SK-N-SH (cell line): ENCODE measurements at regions of chr6 and their contacts with region 1.

Region 1: GRCh38 chr6:151409260-151409659 is 17.9 kb upstream of the ZBTB2 start:
- DNase-seq: no peak
- H3K4me3 ChIP-seq: no peak overlapping the region
- H3K27ac ChIP-seq: no peak overlapping the region
- H3K4me1 ChIP-seq: no peaks in the 10 kb centered on the region
- H3K27me3 ChIP-seq: no peaks in the 10 kb centered on the region
- CTCF ChIP-seq: no peak
- EP300 ChIP-seq: no peak
- RAD21 ChIP-seq: no peak

Region 2: GRCh38 chr6:151390276-151391032 is 18.8 kb before region 1 on chr6:
- CTCF ChIA-PET with region 1: interaction called, 44 read pairs
- POLR2A ChIA-PET with region 1: no interaction called
- DNase-seq: peak; percentile 98
- H3K4me3 ChIP-seq: peak overlapping the region; percentile 86 to 92; a peak in 3 of 4 replicates
- H3K27ac ChIP-seq: peak overlapping the region; percentile 98 to 99
- H3K4me1 ChIP-seq: peaks cover 24 to 31% of the 10 kb centered on the region in 2 experiments
- H3K27me3 ChIP-seq: no peaks in the 10 kb centered on the region
- CTCF ChIP-seq: no peak
- EP300 ChIP-seq: no peak
- RAD21 ChIP-seq: no peak

Region 3: DNA sequence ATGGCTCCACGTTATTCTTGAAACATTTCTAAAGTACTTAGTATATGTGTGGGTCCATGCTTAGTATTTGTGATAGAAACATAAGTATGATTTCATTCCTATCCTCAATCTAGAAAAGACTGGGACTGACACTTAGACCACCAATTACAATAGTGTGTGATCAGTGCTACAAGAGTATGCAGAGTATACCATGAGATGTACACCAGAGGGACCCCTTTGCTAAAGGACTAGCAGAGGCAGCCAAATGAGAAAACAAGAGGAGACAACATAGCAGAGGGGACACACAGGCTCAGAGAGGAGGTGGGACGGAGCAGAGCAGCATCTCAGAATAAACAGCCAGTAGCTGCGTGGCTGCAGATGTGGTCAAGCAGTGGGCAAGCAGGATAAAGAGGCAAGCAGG is 21.6 kb after region 1 on chr6:
- CTCF ChIA-PET with region 1: interaction called, 16 read pairs
- POLR2A ChIA-PET with region 1: no interaction called
- DNase-seq: no peak
- H3K4me3 ChIP-seq: no peak overlapping the region
- H3K27ac ChIP-seq: no peak overlapping the region
- H3K4me1 ChIP-seq: no peaks in the 10 kb centered on the region; a peak in 1 of 4 replicates
- H3K27me3 ChIP-seq: no peaks in the 10 kb centered on the region
- CTCF ChIP-seq: no peak
- EP300 ChIP-seq: no peak
- RAD21 ChIP-seq: no peak; the same call in 1 of the 2 replicates

Region 4: DNA sequence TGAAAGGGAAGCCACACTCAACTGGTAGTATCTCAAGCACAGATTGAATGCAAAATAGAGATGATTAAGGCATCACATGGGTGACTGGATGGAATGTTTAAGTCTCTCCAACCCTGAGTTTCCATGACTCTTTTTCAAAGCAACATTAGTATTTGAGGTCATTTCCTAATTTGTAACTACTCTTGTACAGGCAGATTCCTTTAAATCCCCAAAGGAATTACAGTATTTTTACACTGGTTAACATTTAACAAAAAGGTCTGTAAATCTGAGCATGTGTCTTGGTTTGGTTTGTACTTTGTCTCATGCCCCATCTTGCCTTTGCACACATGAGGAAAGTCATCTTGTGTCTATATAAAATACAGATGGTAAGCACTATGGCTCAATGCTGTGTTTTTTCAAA is 27.5 kb after region 1 on chr6:
- CTCF ChIA-PET with region 1: interaction called, 16 read pairs
- POLR2A ChIA-PET with region 1: no interaction called
- DNase-seq: no peak
- H3K4me3 ChIP-seq: no peak overlapping the region
- H3K27ac ChIP-seq: peak overlapping the region in 1 of 2 experiments; percentile 48; a peak in 2 of 4 replicates
- H3K4me1 ChIP-seq: peaks cover 2 to 18% of the 10 kb centered on the region in 2 experiments; a peak in 2 of 4 replicates
- H3K27me3 ChIP-seq: no peaks in the 10 kb centered on the region
- CTCF ChIP-seq: no peak
- EP300 ChIP-seq: no peak
- RAD21 ChIP-seq: no peak

Region 5: GRCh38 chr6:151534576-151534975 is 125.3 kb after region 1 on chr6:
- CTCF ChIA-PET with region 1: no interaction called
- POLR2A ChIA-PET with region 1: no interaction called
- DNase-seq: no peak
- H3K4me3 ChIP-seq: no peak overlapping the region
- H3K27ac ChIP-seq: no peak overlapping the region
- H3K4me1 ChIP-seq: no peaks in the 10 kb centered on the region
- H3K27me3 ChIP-seq: no peaks in the 10 kb centered on the region
- CTCF ChIP-seq: no peak
- EP300 ChIP-seq: no peak
- RAD21 ChIP-seq: no peak